ENCODE measurements at regions of chrX and their contacts with region 1.

Region 1: GRCh38 chrX:30889147-30890140 is at the start of gene TAB3:
- DNase-seq: peak; percentile 95
- H3K4me3 Mint-ChIP-seq: peak within 1 kb of the TSS; percentile 85
- H3K27ac Mint-ChIP-seq: peak within 1 kb of the TSS; percentile 93
- H3K4me1 Mint-ChIP-seq: peaks cover 30% of the 10 kb centered on the region
- H3K27me3 Mint-ChIP-seq: no peaks in the 10 kb centered on the region
- total RNA-seq, gene TAB3: 13.6 to 15.7 TPM

Region 2: DNA sequence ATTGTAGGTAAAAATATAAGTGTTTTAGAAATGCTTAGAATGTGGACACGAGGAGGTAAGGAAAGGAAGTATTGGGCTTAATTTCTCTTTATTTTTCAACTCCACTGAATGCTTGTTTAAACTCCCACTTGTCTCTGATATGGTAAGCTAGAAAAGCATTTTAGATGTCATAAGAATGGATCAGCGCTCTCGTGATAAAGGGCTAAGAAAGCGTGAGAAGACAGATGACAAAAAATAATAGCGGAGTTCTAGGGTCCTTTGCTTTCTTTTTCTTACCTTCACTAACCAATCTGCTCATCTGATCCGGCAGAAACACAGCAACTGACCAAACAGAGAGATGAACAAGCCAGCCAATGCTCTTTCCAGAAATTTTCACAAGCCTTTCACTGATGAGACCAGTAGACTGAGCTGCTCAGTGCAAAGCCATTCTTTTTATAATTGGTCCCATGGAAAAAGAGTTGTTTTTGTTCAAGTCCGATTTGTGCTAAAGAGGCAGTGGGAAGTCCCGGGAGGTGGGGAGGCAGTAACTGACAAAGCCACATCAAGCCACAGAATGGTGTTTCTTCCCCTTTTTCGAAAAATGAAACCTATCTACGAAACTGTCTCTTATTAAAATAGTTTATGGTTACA is 312.0 kb before region 1 on chrX and contains the start of gene TASL:
- CTCF ChIA-PET with region 1: no interaction called
- intact Hi-C with region 1: loop called (anchors 1 kb)
- DNase-seq: peak; percentile 48
- H3K4me3 Mint-ChIP-seq: peak within 1 kb of the TSS; percentile 82
- H3K27ac Mint-ChIP-seq: peak within 1 kb of the TSS; percentile 86
- H3K4me1 Mint-ChIP-seq: peaks cover 17% of the 10 kb centered on the region
- H3K27me3 Mint-ChIP-seq: no peaks in the 10 kb centered on the region
- total RNA-seq, gene TASL: 0.79 to 1.1 TPM

Region 3: DNA sequence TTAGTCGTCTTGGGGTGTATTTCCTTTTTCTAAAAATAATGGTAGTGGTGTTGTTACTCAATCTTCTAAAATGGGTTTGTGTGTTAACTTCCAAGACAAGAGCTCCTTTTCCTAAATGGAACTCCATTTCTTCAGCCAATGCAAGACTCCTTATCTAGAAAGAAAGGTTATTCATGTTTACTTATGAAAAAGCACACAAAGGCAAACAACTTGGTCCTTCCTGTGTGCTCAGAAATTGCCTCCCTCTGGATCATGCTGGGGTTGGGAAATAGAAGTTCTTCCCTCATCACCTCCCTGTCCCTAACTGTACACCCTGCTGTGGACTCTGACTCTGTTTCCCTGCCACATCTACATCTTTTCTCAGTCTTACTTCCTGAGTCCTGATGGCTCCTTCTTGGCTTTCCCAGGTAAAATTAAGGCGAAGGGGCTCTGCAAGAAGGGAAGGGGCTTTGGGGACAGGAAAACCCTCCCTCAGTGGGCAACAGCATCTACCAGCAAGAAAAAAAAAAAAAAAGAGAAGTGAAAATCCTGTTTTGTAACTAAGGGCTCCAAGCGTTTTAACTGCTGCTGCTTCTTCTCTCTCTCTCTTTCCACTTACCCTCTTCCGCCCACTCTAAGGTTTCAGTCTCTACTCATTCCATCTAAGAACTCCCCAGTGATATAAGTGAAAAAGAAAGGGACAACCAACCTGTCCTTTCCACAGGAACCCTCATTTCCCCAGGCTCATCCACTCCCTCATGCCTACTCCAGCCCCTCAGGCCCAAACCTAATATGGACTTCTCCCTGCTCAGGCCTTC is 292.0 kb before region 1 on chrX:
- CTCF ChIA-PET with region 1: no interaction called
- intact Hi-C with region 1: no loop called
- DNase-seq: no peak
- H3K4me3 Mint-ChIP-seq: no peak overlapping the region
- H3K27ac Mint-ChIP-seq: no peak overlapping the region
- H3K4me1 Mint-ChIP-seq: peaks cover 18% of the 10 kb centered on the region
- H3K27me3 Mint-ChIP-seq: no peaks in the 10 kb centered on the region

Region 4: GRCh38 chrX:30659421-30659820 is 230.0 kb before region 1 on chrX:
- CTCF ChIA-PET with region 1: no interaction called
- intact Hi-C with region 1: loop called (anchors 1 kb)
- DNase-seq: no peak
- H3K4me3 Mint-ChIP-seq: peak overlapping the region; percentile 29
- H3K27ac Mint-ChIP-seq: peak overlapping the region; percentile 85
- H3K4me1 Mint-ChIP-seq: peaks cover 34% of the 10 kb centered on the region
- H3K27me3 Mint-ChIP-seq: no peaks in the 10 kb centered on the region

Region 5: GRCh38 chrX:30831082-30831481 is 58.4 kb before region 1 on chrX:
- CTCF ChIA-PET with region 1: no interaction called
- intact Hi-C with region 1: loop called (anchors 1 kb)
- DNase-seq: peak; percentile 48
- H3K4me3 Mint-ChIP-seq: no peak overlapping the region
- H3K27ac Mint-ChIP-seq: peak overlapping the region; percentile 12
- H3K4me1 Mint-ChIP-seq: peaks cover 34% of the 10 kb centered on the region
- H3K27me3 Mint-ChIP-seq: no peaks in the 10 kb centered on the region

Region 6: GRCh38 chrX:31070057-31070468 is 180.6 kb after region 1 on chrX:
- CTCF ChIA-PET with region 1: no interaction called
- intact Hi-C with region 1: loop called (anchors 2 kb)
- DNase-seq: peak; percentile 52
- H3K4me3 Mint-ChIP-seq: no peak overlapping the region
- H3K27ac Mint-ChIP-seq: no peak overlapping the region
- H3K4me1 Mint-ChIP-seq: peaks cover 12% of the 10 kb centered on the region
- H3K27me3 Mint-ChIP-seq: no peaks in the 10 kb centered on the region